ENCODE measurements at regions of chr7 and their contacts with region 1.

Region 1: DNA sequence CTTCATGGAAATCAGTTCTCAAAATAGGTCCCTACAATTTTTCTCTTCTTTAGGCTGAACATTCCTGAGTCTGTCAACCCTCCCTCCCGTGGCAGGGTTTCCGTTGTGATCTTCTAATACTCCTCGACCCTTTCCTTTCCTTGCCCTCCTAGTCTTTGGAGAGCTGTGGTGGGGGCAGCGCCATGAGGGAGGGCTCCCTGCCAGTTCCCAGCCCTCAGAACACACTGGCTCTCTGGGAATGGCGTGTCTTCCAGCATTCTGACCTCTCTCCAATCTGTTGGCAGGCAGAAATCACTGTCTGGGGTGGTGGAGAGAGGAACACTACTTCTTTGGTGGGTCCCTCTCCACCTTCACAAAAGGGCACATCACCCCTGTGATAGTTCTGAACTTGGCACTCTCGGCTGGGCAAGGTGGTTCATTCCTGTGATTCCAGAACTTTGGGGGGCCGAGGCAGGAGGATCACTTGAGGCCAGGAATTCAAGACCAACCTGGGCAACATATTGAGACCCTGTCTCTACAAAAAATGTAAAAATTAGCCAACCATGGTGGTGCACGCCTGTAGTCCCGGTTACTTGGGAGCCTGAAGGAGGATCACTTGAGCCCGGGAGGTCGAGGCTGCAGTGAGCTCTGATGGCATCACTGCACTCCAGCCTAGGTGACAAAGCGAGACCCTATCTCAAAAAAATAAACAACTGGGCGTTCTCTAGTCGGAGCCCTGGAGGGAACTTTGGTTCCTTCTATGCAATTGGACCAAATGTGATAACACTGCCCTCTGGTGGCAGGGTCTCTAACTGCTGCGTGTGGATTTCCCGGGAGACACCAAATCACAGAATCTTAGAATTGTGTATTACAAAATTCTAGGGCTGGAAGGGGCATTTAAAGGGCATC is 13.1 kb upstream of the ARPC1A start:
- DNase-seq: peak; percentile 76
- H3K4me3 ChIP-seq: no peak overlapping the region
- H3K27ac ChIP-seq: no peak overlapping the region
- H3K4me1 ChIP-seq: no peaks in the 10 kb centered on the region
- H3K27me3 ChIP-seq: no peaks in the 10 kb centered on the region
- CTCF ChIP-seq: peak; percentile 59 to 90 (median 82)
- EP300 ChIP-seq: no peak
- POLR2A ChIP-seq: no peak

Region 2: GRCh38 chr7:98990356-98990755 is 322.2 kb before region 1 on chr7:
- intact Hi-C with region 1: no loop called
- DNase-seq: peak; percentile 50
- H3K4me3 ChIP-seq: no peak overlapping the region
- H3K27ac ChIP-seq: no peak overlapping the region
- H3K4me1 ChIP-seq: no peaks in the 10 kb centered on the region
- H3K27me3 ChIP-seq: no peaks in the 10 kb centered on the region
- CTCF ChIP-seq: no peak
- EP300 ChIP-seq: no peak
- POLR2A ChIP-seq: no peak

Region 3: GRCh38 chr7:99040104-99040958 is 272.2 kb before region 1 on chr7:
- intact Hi-C with region 1: loop called (anchors 1 kb)
- DNase-seq: peak; percentile 93
- H3K4me3 ChIP-seq: no peak overlapping the region
- H3K27ac ChIP-seq: peak overlapping the region; percentile 48 to 56 (median 54)
- H3K4me1 ChIP-seq: peaks cover 0 to 16% (median 8%) of the 10 kb centered on the region in 4 donors
- H3K27me3 ChIP-seq: no peaks in the 10 kb centered on the region
- CTCF ChIP-seq: peak; percentile 46 to 82 (median 78)
- EP300 ChIP-seq: no peak
- POLR2A ChIP-seq: no peak